Dendritic cell treated with granulocyte-macrophage colony-stimulating factor and Interleukin-4, amounts not matched to agents 40 ng/mL and 50 ng/mL, for 4 days (primary cell): ENCODE measurements at regions of chr6 and their contacts with region 1.

Region 1: GRCh38 chr6:27893059-27893835 is 18.9 kb downstream of the OR2B2 start:
- H3K4me3 Mint-ChIP-seq: no peak overlapping the region
- H3K27ac Mint-ChIP-seq: no peak overlapping the region
- H3K4me1 Mint-ChIP-seq: peaks cover 38% of the 10 kb centered on the region
- H3K27me3 Mint-ChIP-seq: peaks cover 7% of the 10 kb centered on the region

Region 2: DNA sequence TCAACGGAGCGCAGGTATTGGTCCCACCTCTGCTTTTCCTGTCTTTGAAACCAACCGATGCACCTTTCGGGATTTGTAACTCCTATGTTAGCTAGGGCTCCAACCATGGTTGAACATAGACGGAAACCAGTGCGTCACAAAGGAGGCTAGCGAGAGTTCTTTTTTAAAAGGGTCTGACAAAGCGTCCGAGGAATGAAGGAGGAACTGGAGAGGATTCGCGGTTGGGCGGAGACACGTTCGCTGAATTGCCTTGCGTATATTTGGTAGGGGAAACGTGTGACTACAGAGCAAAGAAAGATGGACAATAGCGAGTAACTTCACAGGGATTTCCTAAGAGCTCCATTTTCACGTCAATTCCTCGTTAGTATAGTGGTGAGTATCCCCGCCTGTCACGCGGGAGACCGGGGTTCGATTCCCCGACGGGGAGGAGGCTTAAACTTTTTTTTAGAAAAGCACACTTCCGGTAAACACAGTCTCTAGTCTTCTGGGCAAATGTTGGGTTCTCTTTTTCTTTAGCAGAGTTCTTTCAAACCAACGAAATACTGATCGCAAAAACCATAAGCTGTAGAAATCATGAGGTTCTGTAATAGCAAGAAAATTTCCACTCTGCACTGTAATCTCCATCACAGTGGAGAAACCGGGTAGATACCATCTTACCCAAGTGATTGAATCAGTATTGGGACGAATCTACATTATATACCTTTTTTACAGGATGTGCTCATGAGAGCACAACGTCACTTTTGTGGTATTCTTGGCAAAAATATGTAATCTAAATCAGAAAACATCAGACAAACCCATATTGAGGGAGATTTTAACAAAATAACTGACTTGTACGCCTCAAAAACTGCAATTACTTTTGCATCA is 413.7 kb before region 1 on chr6:
- intact Hi-C with region 1: loop called (anchors 1 kb)
- H3K4me3 Mint-ChIP-seq: no peak overlapping the region
- H3K27ac Mint-ChIP-seq: no peak overlapping the region
- H3K4me1 Mint-ChIP-seq: no peaks in the 10 kb centered on the region
- H3K27me3 Mint-ChIP-seq: peaks cover 6% of the 10 kb centered on the region

Region 3: DNA sequence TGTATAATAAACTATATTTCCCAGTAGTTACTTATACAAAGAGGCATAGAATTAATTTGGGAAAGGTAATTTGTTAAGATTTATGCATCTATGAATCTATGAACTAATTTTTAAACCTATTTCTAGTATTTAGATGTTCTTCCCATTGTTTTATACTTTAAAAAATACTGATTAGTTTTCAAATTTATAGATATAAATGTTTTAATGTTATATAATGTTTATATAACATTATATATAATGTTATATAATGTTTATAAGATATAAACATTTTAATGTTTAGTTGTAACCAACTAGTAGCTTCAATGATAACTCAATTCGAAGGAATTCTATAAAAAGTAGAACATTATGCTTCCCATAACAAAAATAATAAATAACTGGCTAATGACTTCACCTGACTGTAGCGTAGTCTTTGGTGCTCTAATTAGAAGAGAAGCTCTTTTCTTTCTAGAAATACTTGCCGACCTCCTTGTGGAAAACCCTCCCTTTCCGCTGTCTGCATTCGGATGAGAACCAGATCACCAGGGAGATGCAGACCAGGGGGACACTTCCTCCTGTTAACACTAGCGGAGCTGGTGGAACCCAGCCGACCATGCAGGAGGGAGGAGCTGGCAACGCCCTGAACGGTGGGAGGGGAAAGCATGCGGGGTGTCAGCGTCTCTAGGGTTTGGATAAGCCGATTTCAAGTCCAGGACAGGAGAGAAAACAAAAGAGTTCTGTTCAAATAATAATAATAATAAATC is 139.4 kb before region 1 on chr6:
- intact Hi-C with region 1: loop called (anchors 2 kb)
- H3K4me3 Mint-ChIP-seq: peak overlapping the region; percentile 52
- H3K27ac Mint-ChIP-seq: peak overlapping the region; percentile 21
- H3K4me1 Mint-ChIP-seq: peaks cover 26% of the 10 kb centered on the region
- H3K27me3 Mint-ChIP-seq: peaks cover 3% of the 10 kb centered on the region

Region 4: DNA sequence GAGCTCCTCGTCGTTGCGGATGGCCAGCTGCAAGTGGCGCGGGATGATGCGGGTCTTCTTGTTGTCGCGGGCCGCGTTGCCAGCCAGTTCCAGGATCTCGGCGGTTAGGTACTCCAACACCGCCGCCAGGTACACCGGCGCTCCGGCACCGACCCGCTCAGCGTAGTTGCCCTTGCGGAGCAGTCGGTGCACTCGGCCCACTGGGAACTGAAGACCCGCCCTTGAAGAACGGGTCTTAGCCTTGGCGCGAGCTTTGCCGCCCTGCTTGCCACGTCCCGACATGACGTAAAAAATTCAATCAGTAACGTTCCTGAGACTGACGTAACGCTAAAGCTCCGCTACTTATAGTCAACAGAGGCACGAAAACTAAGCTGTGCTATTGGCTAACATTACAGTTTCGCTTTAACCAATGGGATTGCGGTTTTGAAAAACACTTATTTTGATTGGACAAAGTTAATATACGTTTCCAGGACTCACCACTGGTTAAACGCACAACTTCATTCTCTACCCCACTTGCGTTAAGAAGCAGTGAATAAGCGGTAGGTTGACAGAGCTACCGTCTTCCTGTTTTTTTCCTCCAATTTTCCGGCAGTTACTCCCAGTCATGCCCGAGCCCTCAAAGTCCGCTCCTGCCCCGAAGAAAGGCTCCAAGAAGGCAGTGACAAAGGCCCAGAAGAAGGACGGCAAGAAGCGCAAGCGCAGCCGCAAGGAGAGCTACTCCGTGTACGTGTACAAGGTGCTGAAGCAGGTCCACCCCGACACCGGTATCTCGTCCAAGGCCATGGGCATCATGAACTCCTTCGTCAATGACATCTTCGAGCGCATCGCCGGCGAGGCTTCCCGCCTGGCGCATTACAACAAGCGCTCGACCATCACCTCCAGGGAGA is 54.9 kb before region 1 on chr6:
- intact Hi-C with region 1: loop called (anchors 1 kb)
- H3K4me3 Mint-ChIP-seq: no peak overlapping the region
- H3K27ac Mint-ChIP-seq: no peak overlapping the region
- H3K4me1 Mint-ChIP-seq: peaks cover 12% of the 10 kb centered on the region
- H3K27me3 Mint-ChIP-seq: no peaks in the 10 kb centered on the region

Region 5: DNA sequence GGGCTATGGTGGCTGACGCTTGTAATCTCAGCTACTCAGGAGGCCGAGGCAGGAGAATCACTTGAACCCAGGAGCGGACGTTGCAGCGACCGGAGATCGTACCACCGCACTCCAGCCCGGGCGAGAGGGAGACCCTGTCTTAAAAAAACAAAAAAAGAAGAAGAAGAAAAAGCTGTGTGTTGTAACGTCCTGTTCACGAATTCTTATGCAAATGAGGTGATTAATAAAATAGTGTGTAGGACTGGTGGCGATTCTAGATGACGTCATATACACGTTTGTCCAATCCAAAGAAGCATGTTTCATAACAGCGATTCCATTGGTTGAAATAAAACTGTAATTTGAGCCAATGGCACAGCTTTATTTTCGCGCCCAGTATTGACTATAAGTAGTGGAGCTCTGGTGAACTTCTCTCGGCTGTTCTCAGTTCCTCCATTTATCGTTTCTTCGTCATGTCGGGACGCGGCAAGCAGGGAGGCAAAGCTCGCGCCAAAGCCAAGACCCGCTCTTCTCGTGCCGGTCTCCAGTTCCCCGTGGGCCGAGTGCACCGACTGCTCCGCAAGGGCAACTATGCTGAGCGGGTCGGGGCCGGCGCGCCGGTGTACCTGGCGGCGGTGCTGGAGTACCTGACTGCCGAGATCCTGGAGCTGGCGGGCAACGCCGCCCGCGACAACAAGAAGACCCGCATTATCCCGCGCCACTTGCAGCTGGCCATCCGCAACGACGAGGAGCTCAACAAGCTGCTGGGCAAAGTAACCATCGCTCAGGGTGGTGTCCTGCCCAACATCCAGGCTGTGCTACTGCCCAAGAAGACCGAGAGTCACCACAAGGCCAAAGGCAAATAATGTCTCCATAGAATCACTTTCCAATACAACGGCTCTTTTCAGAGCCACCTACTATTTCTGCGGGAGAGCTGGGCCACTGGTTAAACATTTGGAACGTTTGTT is 28.1 kb before region 1 on chr6:
- intact Hi-C with region 1: loop called (anchors 2 kb)
- H3K4me3 Mint-ChIP-seq: peak overlapping the region; percentile 89
- H3K27ac Mint-ChIP-seq: peak overlapping the region; percentile 98
- H3K4me1 Mint-ChIP-seq: peaks cover 53% of the 10 kb centered on the region
- H3K27me3 Mint-ChIP-seq: peaks cover 12% of the 10 kb centered on the region